Transverse colon (tissue), 4 donors: ENCODE measurements at regions of chr10 and their contacts with region 1.

Region 1: DNA sequence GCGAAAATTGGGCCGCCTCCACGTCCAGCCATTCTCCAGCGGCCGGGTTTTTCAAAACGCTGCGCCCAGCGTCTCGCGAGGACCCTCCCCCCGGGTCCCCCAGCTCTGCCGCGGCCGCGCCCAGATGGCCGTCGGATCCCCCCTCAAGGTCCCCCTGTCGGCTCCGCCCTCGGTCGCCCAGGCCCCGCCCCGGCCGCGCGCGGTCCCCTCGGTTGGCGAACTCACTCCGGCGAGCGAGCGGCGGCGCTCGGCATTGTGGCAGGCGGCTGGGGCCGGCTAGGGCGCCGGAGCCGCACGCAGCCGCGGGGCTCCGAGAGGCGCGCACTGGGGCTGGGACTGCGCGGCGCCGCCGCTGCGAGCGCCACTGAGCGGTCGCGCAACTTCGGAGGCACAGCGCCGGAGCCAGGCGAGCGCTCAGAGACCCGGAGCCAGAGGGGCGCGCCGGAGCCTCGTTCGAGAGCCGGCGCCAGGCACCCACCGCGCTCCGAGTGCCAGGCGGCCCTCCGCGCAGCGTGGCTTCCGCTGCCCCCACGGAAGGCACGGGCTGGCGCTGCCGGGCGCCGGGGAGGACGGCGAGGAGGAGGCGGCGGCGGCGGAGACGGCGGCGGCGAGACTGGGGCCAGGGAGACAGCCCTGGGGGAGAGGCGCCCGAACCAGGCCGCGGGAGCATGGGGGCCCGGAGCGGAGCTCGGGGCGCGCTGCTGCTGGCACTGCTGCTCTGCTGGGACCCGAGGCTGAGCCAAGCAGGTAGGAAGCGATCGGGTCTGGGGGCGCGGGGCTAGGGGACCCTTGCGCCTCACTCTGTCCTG is at the start of gene UNC5B:
- DNase-seq: peak; percentile 89
- H3K4me3 ChIP-seq: peak within 1 kb of the TSS; percentile 50 to 78 (median 68)
- H3K27ac ChIP-seq: peak within 1 kb of the TSS; percentile 90 to 93 (median 90)
- H3K4me1 ChIP-seq: peaks cover 12 to 45% (median 32%) of the 10 kb centered on the region in 4 donors
- H3K27me3 ChIP-seq: peaks cover 55% of the 10 kb centered on the region
- CTCF ChIP-seq: peak in 4 of 5 experiments; percentile 16 to 43 (median 20)
- EP300 ChIP-seq: no peak
- POLR2A ChIP-seq: peak; percentile 26
- total RNA-seq, gene UNC5B: 12.3 to 74.1 (median 41.2) TPM

Region 2: DNA sequence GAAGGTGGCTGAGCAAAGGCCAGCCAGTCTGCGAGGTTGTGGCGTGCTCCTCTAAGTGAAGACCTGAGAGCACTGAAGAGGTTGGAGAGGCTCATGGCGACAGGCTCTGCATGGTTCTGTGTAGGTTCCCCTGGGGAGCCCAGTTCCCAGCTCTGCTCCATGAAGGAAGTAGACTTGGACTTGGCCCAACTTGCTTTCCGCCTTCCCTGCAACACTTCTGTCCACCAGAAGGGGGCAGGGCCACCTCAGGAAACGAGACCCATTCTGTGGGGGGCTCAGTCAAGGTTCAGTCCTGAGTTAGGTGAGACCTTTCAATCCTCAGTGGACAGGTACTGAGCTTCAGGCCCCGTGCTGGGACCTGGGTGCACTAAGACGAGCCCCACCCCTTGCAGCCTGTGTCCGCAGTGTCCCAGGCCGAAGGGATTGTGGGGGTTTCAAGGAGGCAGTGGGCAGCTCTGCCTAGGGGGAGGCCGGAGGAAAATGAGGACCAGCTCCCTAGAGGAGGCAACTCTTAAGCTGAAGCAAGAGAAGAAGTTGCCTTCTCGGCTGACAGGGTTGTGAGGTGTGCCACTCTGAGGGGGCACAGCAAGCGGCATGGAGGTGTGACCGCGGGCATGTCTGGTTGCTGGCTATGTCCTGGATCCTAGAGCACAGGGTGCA is 309.1 kb before region 1 on chr10:
- in situ Hi-C with region 1: loop called in 1 of 4 experiments (anchors 10 kb)
- intact Hi-C with region 1: no loop called
- DNase-seq: peak; percentile 56
- H3K4me3 ChIP-seq: no peak overlapping the region
- H3K27ac ChIP-seq: no peak overlapping the region
- H3K4me1 ChIP-seq: peaks cover 4 to 23% (median 10%) of the 10 kb centered on the region in 4 donors
- H3K27me3 ChIP-seq: no peaks in the 10 kb centered on the region
- CTCF ChIP-seq: peak; percentile 79 to 92 (median 89)
- EP300 ChIP-seq: no peak
- POLR2A ChIP-seq: no peak

Region 3: DNA sequence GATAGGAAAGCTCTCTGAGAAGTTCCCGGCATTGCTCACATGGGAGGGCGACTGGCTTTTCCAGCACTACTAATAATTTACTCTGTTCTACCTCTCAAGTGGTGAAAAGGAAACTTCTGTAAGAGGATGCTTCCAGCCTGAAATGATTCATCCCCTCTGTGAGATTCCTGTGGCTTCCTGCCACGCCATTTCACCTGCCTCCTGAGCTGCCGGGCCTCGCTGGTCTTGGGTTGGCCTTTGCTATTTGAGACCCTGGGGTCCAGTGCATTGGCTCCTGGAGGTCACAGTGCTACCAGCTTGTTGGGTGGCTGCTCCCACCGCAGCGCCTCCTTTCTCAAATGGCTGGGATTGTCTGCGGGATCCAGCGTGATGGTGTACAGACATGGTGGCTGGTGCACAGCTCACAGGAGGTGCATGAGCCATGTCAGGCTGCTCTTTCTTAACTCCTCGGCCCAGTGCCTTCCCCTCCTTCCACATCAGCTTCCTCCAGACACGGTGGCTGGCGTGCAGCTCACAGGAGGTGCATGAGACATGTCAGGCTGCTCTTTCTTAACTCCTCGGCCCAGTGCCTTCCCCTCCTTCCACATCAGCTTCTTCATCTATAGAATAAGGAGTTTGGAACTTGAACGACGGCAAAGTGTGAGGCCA is 281.2 kb before region 1 on chr10:
- in situ Hi-C with region 1: loop called in 1 of 4 experiments (anchors 10 kb)
- intact Hi-C with region 1: loop called (anchors 5 kb)
- DNase-seq: no peak
- H3K4me3 ChIP-seq: no peak overlapping the region
- H3K27ac ChIP-seq: no peak overlapping the region
- H3K4me1 ChIP-seq: no peaks in the 10 kb centered on the region
- H3K27me3 ChIP-seq: peaks cover 16% of the 10 kb centered on the region
- CTCF ChIP-seq: no peak
- EP300 ChIP-seq: no peak
- POLR2A ChIP-seq: no peak

Region 4: DNA sequence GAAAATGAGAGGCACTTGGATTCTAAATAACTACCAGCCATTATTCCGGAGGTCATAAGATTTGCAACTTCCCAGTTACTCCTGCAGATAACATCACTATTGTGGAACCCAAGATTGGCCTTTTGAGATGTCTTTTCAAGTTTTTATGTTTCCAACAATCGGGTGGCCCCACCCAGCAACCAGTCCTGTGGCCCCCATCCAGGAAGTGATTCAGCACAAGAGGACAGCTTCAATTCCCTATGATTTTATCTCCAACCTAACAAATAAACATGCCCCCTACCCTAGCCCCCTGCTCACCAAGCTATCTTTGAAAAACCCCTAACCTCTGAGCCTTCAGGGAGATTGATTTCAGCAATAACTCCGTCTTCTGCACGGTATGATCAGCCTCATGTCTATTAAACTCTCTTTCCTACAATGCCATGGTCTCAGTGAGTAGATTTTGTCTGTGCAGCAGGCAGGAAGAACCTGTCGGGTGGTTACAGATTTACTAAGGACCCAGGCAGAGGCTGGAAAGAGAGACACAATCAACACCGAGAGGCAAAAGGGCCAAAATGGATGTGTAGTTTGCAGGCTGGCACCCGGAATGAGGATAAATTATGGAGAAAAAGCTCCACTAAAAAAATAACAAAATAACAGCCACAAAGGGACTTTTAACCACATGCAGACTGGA is 84.1 kb before region 1 on chr10:
- in situ Hi-C with region 1: no loop called
- intact Hi-C with region 1: no loop called
- DNase-seq: no peak
- H3K4me3 ChIP-seq: no peak overlapping the region
- H3K27ac ChIP-seq: no peak overlapping the region
- H3K4me1 ChIP-seq: peaks cover 0 to 7% (median 2%) of the 10 kb centered on the region in 4 donors
- H3K27me3 ChIP-seq: no peaks in the 10 kb centered on the region
- CTCF ChIP-seq: no peak
- EP300 ChIP-seq: no peak
- POLR2A ChIP-seq: no peak

Region 5: GRCh38 chr10:71244431-71245419 is 32.2 kb after region 1 on chr10:
- in situ Hi-C with region 1: no loop called
- intact Hi-C with region 1: no loop called
- DNase-seq: no peak
- H3K4me3 ChIP-seq: peak overlapping the region in 2 of 4 donors; percentile 13 to 25
- H3K27ac ChIP-seq: peak overlapping the region; percentile 80 to 92 (median 90)
- H3K4me1 ChIP-seq: peaks cover 48 to 81% (median 57%) of the 10 kb centered on the region in 4 donors
- H3K27me3 ChIP-seq: no peaks in the 10 kb centered on the region
- CTCF ChIP-seq: no peak
- EP300 ChIP-seq: no peak
- POLR2A ChIP-seq: peak; percentile 31